ENCODE measurements at regions of chr9 and their contacts with region 1.

Region 1: DNA sequence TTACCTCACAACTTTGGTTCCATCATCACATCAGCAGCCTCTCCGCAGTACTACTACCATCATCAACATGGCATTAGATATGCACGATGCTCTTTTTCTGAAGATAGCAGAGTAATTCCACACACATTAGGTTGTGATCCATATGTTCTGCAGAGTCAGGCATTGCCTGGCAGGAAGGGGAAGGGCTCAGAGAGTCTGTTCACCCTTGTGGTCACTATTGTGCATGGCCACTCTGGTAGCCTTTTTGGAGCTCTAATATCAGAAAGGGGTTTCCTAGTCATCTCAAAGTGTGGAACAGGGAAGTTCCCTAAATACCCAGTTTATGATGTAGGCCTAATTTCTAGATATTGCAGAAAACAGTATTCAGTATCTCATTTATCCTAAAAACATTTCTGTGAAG is 373.6 kb downstream of the BNC2 start:
- DNase-seq: no peak
- ATAC-seq: no peak
- H3K4me3 ChIP-seq: no peak overlapping the region
- H3K27ac ChIP-seq: no peak overlapping the region
- H3K4me1 ChIP-seq: no peaks in the 10 kb centered on the region
- H3K27me3 ChIP-seq: no peaks in the 10 kb centered on the region
- CTCF ChIP-seq: no peak

Region 2: GRCh38 chr9:16434526-16434925 is 62.4 kb before region 1 on chr9:
- intact Hi-C with region 1: loop called in 1 of 10 experiments (anchors 10 kb)
- DNase-seq: no peak
- ATAC-seq: no peak
- H3K4me3 ChIP-seq: no peak overlapping the region
- H3K27ac ChIP-seq: no peak overlapping the region
- H3K4me1 ChIP-seq: no peaks in the 10 kb centered on the region
- H3K27me3 ChIP-seq: no peaks in the 10 kb centered on the region
- CTCF ChIP-seq: no peak

Region 3: GRCh38 chr9:16601991-16602390 is 105.1 kb after region 1 on chr9:
- intact Hi-C with region 1: no loop called
- DNase-seq: no peak
- ATAC-seq: no peak
- H3K4me3 ChIP-seq: no peak overlapping the region
- H3K27ac ChIP-seq: no peak overlapping the region
- H3K4me1 ChIP-seq: peaks cover 0 to 12% (median 0%) of the 10 kb centered on the region in 9 donors
- H3K27me3 ChIP-seq: peaks cover 0 to 5% (median 0%) of the 10 kb centered on the region in 7 donors
- CTCF ChIP-seq: peak in 1 of 9 donors; percentile 12